ENCODE measurements at regions of chr7 and their contacts with region 1.

Region 1: GRCh38 chr7:138886501-138886917 is 88.5 kb upstream of the ATP6V0A4 start:
- DNase-seq: peak; percentile 72
- H3K4me3 Mint-ChIP-seq: no peak overlapping the region
- H3K27ac Mint-ChIP-seq: no peak overlapping the region
- H3K4me1 Mint-ChIP-seq: peaks cover 13% of the 10 kb centered on the region
- H3K27me3 Mint-ChIP-seq: no peaks in the 10 kb centered on the region
- CTCF ChIP-seq: peak; percentile 59

Region 2: DNA sequence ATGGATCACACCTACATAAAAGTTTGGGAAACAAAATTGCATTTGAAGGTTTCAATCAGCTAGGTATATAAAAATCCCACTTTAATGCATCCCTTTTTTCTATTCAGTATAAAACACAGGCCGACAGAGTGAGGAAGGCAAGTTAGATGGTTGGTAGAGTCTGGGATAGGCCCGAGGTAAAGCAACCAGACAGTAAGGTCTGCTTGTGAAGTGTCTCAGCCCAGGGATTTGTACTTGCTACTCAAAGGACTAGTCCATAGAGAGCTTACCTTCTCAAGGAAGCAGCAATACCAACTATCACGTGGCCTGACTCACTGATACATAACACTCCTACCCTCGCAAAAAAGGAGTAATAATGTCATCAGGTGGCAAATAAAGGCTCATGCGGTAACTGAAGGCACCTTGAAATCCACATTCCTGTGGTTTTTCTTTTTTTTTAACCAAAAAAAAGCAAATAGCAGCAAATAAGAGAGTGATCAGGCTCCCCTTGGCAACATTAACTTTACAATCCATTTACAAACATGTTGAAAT is 32.3 kb before region 1 on chr7:
- CTCF ChIA-PET with region 1: no interaction called
- POLR2A ChIA-PET with region 1: no interaction called
- intact Hi-C with region 1: no loop called
- DNase-seq: no peak
- H3K4me3 Mint-ChIP-seq: no peak overlapping the region
- H3K27ac Mint-ChIP-seq: no peak overlapping the region
- H3K4me1 Mint-ChIP-seq: no peaks in the 10 kb centered on the region
- H3K27me3 Mint-ChIP-seq: no peaks in the 10 kb centered on the region
- CTCF ChIP-seq: no peak

Region 3: DNA sequence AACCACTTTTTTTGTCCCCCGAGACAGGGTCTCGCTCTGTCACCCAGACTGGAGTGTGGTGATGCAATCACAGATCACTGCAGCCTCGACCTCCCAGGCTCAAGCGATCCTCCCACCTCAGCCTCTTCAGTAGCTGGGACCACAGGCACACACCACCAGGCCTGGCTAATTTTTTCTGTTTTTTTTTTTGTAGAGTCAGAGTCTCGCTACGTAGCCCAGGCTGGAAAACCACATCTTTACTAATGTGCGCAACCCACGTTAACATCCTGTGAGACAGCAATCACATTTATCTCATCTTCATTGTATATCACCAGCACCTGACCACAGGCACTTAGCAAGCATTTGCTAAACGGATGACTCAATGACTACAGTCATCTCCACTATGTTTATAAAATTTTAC is 10.7 kb before region 1 on chr7:
- CTCF ChIA-PET with region 1: interaction called, 25 read pairs
- POLR2A ChIA-PET with region 1: interaction called, 6 read pairs
- intact Hi-C with region 1: no loop called
- DNase-seq: peak; percentile 55
- H3K4me3 Mint-ChIP-seq: no peak overlapping the region
- H3K27ac Mint-ChIP-seq: peak overlapping the region; percentile 51
- H3K4me1 Mint-ChIP-seq: peaks cover 20% of the 10 kb centered on the region
- H3K27me3 Mint-ChIP-seq: no peaks in the 10 kb centered on the region
- CTCF ChIP-seq: no peak

Region 4: GRCh38 chr7:138975343-138976104 is 89.0 kb after region 1 on chr7:
- CTCF ChIA-PET with region 1: interaction called, 17 read pairs
- POLR2A ChIA-PET with region 1: interaction called, 6 read pairs
- intact Hi-C with region 1: loop called (anchors 1 kb)
- DNase-seq: no peak
- H3K4me3 Mint-ChIP-seq: no peak overlapping the region
- H3K27ac Mint-ChIP-seq: no peak overlapping the region
- H3K4me1 Mint-ChIP-seq: peaks cover 18% of the 10 kb centered on the region
- H3K27me3 Mint-ChIP-seq: no peaks in the 10 kb centered on the region
- CTCF ChIP-seq: no peak

Region 5: DNA sequence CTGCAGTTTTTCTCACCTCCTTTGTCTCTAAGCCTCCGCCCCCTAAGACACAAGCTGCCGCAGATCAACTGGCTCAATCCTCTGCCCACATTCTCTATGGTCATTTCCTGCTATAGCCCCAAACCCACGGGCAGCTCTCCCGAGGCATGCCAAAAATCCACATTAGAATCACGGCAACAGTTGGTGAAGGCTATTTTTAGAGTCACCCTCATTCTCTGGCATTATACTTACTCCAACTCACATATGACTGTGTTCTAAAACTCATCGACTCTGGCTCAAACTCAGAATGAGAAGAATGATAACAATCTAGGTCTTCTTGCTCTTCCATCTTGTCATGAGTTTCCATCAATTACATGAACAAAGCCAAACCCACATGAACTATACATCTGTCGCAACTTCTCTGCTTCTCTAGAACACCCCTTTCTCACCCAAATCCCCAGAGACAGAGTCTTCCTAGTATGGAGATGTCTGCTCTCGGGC is 105.6 kb after region 1 on chr7:
- CTCF ChIA-PET with region 1: interaction called, 10 read pairs
- POLR2A ChIA-PET with region 1: no interaction called
- intact Hi-C with region 1: no loop called
- DNase-seq: no peak
- H3K4me3 Mint-ChIP-seq: no peak overlapping the region
- H3K27ac Mint-ChIP-seq: no peak overlapping the region
- H3K4me1 Mint-ChIP-seq: no peaks in the 10 kb centered on the region
- H3K27me3 Mint-ChIP-seq: no peaks in the 10 kb centered on the region
- CTCF ChIP-seq: no peak

Region 6: GRCh38 chr7:139075031-139075652 is 188.6 kb after region 1 on chr7:
- CTCF ChIA-PET with region 1: interaction called, 32 read pairs
- POLR2A ChIA-PET with region 1: interaction called, 6 read pairs
- intact Hi-C with region 1: loop called (anchors 1 kb)
- DNase-seq: peak; percentile 79
- H3K4me3 Mint-ChIP-seq: no peak overlapping the region
- H3K27ac Mint-ChIP-seq: peak overlapping the region; percentile 27
- H3K4me1 Mint-ChIP-seq: peaks cover 7% of the 10 kb centered on the region
- H3K27me3 Mint-ChIP-seq: no peaks in the 10 kb centered on the region
- CTCF ChIP-seq: peak; percentile 82